Activated T-helper 1 cell treated with anti-CD3 and anti-CD28 coated beads, Interleukin-12 subunit alpha, Interleukin-12 subunit beta, Interleukin-2, Interleukin-4 antibody, amounts not matched to agents 30 ng/mL and 10 ng/mL and 1 ng/mL, durations not matched to agents 14 hours and 24 hours and 36 hours (primary cell): ENCODE measurements at regions of chr13 and their contacts with region 1.

Region 1: GRCh38 chr13:30132623-30133553 is 174.5 kb downstream of the KATNAL1 start:
- DNase-seq: peak; percentile 92
- H3K4me3 Mint-ChIP-seq: no peak overlapping the region
- H3K27ac Mint-ChIP-seq: peak overlapping the region; percentile 67
- H3K4me1 Mint-ChIP-seq: peaks cover 18% of the 10 kb centered on the region
- H3K27me3 Mint-ChIP-seq: no peaks in the 10 kb centered on the region

Region 2: GRCh38 chr13:30172593-30173302 is 39.9 kb after region 1 on chr13:
- intact Hi-C with region 1: loop called (anchors 5 kb)
- DNase-seq: no peak
- H3K4me3 Mint-ChIP-seq: no peak overlapping the region
- H3K27ac Mint-ChIP-seq: no peak overlapping the region
- H3K4me1 Mint-ChIP-seq: peaks cover 41% of the 10 kb centered on the region
- H3K27me3 Mint-ChIP-seq: peaks cover 4% of the 10 kb centered on the region

Region 3: DNA sequence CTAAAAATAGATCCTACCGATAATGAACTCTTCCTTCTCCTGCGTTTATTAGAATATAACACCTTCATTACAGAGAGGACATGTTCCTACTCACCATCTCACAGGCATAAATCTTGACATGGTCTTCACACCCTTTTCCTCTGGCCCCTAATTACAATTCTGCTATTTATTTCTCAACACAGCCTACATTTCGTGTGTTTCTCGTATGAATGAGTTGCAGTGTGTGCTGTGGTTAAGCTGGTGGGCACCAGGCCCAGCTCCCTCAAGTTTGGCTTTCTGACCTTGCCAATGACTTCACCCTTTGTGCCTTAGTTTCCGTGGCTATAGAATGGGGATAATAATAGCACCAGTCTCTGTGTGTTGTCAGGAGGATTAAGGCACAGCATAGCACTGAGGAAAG is 186.8 kb after region 1 on chr13:
- intact Hi-C with region 1: no loop called
- DNase-seq: no peak
- H3K4me3 Mint-ChIP-seq: no peak overlapping the region
- H3K27ac Mint-ChIP-seq: no peak overlapping the region
- H3K4me1 Mint-ChIP-seq: peaks cover 12% of the 10 kb centered on the region
- H3K27me3 Mint-ChIP-seq: no peaks in the 10 kb centered on the region

Region 4: GRCh38 chr13:30334663-30335386 is 201.9 kb after region 1 on chr13:
- intact Hi-C with region 1: loop called (anchors 1 kb)
- DNase-seq: no peak
- H3K4me3 Mint-ChIP-seq: no peak overlapping the region
- H3K27ac Mint-ChIP-seq: no peak overlapping the region
- H3K4me1 Mint-ChIP-seq: peaks cover 26% of the 10 kb centered on the region
- H3K27me3 Mint-ChIP-seq: no peaks in the 10 kb centered on the region

Region 5: DNA sequence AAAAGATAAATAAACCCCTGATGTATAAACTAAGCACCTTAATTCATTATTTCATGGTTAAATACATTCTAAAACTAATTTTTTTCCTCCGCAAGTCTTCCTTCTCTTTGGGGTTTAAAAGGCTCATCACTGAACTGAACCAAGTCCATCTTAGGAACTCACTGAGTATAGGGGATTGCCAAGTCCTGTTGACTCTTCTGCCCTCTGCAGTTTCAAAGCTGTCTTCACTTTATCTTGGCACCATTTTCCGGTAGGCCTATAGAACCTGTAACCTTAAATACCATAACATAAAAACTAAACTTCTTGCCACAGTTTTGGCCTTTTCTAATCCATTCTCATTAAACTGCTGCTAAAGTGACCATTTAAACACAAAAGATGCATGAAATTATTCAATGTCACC is 418.3 kb after region 1 on chr13:
- intact Hi-C with region 1: loop called (anchors 1 kb)
- DNase-seq: no peak
- H3K4me3 Mint-ChIP-seq: no peak overlapping the region
- H3K27ac Mint-ChIP-seq: no peak overlapping the region
- H3K4me1 Mint-ChIP-seq: peaks cover 4% of the 10 kb centered on the region
- H3K27me3 Mint-ChIP-seq: peaks cover 10% of the 10 kb centered on the region

Region 6: DNA sequence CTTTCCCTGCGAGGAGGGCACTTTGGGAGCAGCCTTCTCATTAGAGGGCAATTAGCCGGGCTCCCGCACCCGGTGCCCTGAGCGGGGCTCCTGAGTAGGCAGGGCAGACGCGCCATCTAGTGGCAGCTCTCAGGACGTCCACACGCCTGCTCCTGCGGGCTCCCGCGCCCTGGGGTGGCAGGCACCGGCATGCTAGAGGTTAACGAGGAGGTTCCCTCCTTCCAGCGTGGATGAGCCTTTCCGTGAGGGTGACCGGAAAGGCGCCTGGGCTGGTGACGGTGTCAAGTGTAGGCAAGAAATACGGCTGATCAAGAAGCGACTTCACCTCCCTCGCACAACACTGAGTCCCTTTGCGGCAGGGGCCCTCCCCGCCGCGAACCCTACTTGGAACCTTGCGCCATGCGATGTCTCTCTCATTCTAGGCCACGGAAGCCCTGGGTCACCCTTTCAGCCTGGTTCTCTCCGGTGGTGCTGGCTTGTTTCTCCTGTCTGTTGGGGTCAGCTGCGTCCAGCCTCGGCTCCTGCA is 670.1 kb after region 1 on chr13:
- intact Hi-C with region 1: loop called (anchors 1 kb)
- DNase-seq: peak; percentile 69
- H3K4me3 Mint-ChIP-seq: peak overlapping the region; percentile 47
- H3K27ac Mint-ChIP-seq: no peak overlapping the region
- H3K4me1 Mint-ChIP-seq: peaks cover 28% of the 10 kb centered on the region
- H3K27me3 Mint-ChIP-seq: peaks cover 4% of the 10 kb centered on the region

Region 7: DNA sequence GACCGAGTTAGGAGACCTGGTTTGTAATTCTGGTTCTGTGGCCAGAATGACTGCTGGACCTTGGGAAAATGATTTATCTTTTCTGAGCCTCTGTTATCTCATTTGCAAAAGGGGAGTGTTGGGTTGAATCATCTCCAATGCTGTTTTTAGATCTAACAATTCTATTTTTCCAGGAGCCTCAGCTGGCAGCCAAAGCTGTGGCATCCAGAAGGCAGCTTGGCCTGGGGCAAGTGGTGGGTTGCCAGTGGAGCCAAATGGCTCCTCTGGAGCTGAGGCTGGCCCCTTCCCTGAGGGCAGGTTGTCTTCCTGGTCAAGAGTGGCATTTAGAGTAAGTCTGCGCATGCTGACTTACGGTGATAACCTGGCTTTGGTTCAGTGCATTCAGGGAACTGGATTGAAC is 1088.2 kb after region 1 on chr13:
- intact Hi-C with region 1: no loop called
- DNase-seq: no peak
- H3K4me3 Mint-ChIP-seq: no peak overlapping the region
- H3K27ac Mint-ChIP-seq: no peak overlapping the region
- H3K4me1 Mint-ChIP-seq: no peaks in the 10 kb centered on the region
- H3K27me3 Mint-ChIP-seq: peaks cover 3% of the 10 kb centered on the region